K562 (cell line): ENCODE measurements at regions of chr16 and their contacts with region 1.

Region 1: DNA sequence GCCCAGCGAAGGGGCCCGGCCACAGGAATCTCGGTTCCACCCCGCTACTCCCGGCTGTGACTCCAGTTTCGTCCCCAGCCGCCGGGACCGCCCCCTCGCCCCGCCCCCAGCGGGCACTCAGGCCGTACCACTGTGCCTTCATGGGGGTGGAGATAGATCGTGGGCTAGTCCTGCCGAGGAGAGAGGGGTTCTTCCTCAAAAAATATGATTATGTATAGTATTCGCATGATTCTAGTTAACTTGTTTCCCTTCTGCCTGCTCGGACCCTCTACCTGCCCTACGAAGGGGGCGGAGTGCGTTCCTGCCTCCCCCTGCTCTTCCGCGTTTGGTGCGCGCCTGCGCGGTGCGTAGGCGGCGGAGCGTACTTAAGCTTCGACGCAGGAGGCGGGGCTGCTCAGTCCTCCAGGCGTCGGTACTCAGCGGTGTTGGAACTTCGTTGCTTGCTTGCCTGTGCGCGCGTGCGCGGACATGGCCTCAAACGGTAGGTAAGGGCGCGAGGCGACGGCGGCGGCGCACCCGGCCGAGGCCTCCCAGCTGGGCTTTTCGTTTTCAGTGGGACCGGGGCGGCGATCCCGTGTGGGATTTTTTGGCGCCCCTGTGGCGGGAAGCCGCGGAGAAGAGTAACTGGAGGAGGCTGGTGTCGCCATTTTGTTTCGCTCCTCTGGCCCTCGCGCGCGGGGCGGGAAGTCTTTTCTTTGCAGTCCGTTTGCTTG is at the start of gene FUS:
- DNase-seq: peak; percentile 94 to 97 (median 94)
- ATAC-seq: peak; percentile 75
- H3K4me3 ChIP-seq: peak within 1 kb of the TSS; percentile 81
- H3K27ac ChIP-seq: peak within 1 kb of the TSS; percentile 100
- H3K4me1 ChIP-seq: peaks cover 18 to 21% of the 10 kb centered on the region in 2 experiments
- H3K27me3 ChIP-seq: no peaks in the 10 kb centered on the region; a peak in 1 of 5 replicates
- CTCF ChIP-seq: peak in 2 of 3 experiments; percentile 4 to 5; a peak in 1 of 6 replicates
- EP300 ChIP-seq: no peak
- POLR2A ChIP-seq: peak; percentile 100
- RAD21 ChIP-seq: peak; percentile 2 to 25; a peak in 1 of 4 replicates
- polyA plus RNA-seq, gene FUS: 43.9 to 59.5 TPM

Region 2: DNA sequence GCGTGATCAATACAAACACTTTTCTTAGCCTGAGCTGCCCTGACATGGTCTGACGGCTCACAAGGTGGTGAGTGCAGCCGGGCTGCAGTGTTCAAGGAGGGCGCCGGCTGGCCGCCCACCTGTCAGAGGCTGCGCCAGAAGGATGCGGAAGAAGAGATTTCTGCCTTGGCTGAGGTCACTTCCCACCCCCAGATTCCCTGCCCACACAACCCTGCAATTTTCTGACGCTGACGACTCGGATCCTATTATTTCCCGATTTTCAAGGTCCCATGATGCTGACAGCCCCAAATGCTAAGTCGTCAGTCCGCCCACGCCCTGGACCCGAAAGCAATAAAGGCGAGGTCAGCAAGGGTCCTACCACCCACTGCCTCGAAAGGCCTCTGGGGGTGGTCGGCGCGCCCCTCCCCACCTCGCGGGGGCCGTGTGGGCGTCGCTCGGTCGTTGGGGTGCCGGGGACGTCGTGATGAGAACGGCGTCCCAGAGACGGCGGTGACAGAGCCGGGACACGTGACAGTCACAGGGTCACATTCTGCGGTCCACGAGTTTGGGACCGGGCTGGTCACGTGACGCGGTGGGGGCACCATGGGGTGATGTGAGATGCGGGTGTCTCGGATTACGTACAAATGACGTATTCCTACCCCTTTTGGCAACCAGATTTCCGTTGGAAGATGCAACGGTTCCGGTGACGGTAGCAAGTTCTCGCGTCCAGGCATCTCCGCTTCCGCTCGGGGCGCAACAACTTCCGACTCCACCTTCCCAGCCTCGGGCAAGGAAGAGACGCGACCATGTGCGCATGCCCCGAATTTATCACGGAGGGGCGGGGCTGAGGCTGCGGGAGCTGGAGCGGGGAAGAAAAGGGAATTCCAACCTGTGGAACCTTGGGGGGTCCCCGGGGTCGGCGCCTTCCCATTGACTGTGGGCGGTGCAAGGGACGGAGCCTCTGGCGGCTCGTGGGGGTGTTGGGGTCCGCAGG is 146.9 kb before region 1 on chr16 and contains the start of gene STX4:
- CTCF ChIA-PET with region 1: no interaction called
- POLR2A ChIA-PET with region 1: interaction called, 12 read pairs
- in situ Hi-C with region 1: no loop called
- intact Hi-C with region 1: no loop called
- DNase-seq: peak; percentile 91 to 99 (median 96)
- ATAC-seq: peak; percentile 88
- H3K4me3 ChIP-seq: peak within 1 kb of the TSS; percentile 98
- H3K27ac ChIP-seq: peak within 1 kb of the TSS; percentile 91
- H3K4me1 ChIP-seq: peaks cover 16 to 20% of the 10 kb centered on the region in 2 experiments
- H3K27me3 ChIP-seq: no peaks in the 10 kb centered on the region
- CTCF ChIP-seq: no peak; a peak in 1 of 6 replicates
- EP300 ChIP-seq: peak; percentile 81
- POLR2A ChIP-seq: peak; percentile 68
- RAD21 ChIP-seq: 0 out of 4 replicates have a peak, but pooled peaks of 1 of the 2 experiments have one; percentile 2
- polyA plus RNA-seq, gene STX4: 3.2 to 7.4 TPM

Region 3: DNA sequence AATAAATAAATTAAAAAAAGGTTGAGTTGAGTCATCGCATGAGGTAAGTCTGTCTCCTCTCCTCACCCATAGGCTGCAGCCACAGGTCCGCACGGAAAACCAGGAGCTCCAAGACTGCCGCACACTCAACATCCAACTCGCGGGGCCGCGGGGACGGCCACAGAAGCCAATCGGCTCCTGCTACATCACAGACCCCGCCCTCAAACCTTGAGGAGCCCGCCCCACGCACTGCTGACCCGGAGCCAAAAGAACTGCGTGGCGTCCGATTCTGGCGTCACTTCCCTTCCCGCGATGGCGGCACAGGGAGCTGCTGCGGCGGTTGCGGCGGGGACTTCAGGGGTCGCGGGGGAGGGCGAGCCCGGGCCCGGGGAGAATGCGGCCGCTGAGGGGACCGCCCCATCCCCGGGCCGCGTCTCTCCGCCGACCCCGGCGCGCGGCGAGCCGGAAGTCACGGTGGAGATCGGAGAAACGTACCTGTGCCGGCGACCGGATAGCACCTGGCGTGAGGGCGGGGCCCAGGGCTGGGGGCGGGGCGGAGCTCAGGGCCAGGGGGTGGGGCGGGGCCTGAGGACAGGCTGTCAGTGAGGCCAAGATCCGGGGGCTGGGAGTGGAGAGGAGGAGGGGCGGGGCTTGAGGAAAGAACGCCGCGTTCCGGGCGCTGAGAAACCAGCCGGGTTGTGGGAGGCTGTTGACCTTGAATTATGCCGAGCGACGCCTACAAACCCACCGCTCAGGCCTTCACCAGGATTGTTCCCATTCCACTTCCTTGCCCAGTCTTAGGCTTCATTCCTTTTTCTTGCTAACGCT is 62.3 kb before region 1 on chr16 and contains the start of gene KAT8:
- CTCF ChIA-PET with region 1: no interaction called
- POLR2A ChIA-PET with region 1: interaction called, 29 read pairs
- in situ Hi-C with region 1: no loop called
- intact Hi-C with region 1: no loop called
- DNase-seq: peak; percentile 98 to 99 (median 98)
- ATAC-seq: peak; percentile 95
- H3K4me3 ChIP-seq: peak within 1 kb of the TSS; percentile 68
- H3K27ac ChIP-seq: peak within 1 kb of the TSS; percentile 91
- H3K4me1 ChIP-seq: peaks cover 2 to 19% of the 10 kb centered on the region in 2 experiments; a peak in 4 of 5 replicates
- H3K27me3 ChIP-seq: no peaks in the 10 kb centered on the region
- CTCF ChIP-seq: no peak
- EP300 ChIP-seq: peak; percentile 50
- POLR2A ChIP-seq: peak; percentile 95
- RAD21 ChIP-seq: no peak; a peak in 1 of 4 replicates
- polyA plus RNA-seq, gene KAT8: 10.0 to 12.3 TPM

Region 4: DNA sequence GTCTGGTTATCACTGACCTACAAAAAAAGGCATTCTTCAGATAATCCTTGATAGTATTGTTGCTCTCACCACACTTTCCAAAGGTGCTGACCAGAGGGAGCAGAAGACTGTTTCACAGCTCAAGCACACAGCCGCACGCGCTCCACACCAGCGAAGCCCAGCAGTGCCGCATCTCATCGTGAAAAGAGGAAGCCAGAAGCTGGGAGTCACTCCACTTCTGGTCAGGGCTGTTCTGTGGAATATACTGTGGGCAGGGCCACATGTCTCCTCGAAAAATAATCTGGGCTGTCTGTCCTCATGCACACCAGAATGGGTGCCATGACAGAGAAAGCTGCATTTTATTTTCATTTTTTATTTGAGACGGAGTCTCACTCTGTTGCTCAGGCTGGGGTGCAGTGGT is 22.8 kb before region 1 on chr16:
- CTCF ChIA-PET with region 1: no interaction called
- POLR2A ChIA-PET with region 1: interaction called, 37 read pairs
- in situ Hi-C with region 1: no loop called
- intact Hi-C with region 1: no loop called
- DNase-seq: peak in 2 of 4 experiments; percentile 42 to 64
- ATAC-seq: peak; percentile 93
- H3K4me3 ChIP-seq: no peak overlapping the region
- H3K27ac ChIP-seq: no peak overlapping the region
- H3K4me1 ChIP-seq: peaks cover 0 to 7% of the 10 kb centered on the region in 2 experiments; a peak in 3 of 5 replicates
- H3K27me3 ChIP-seq: no peaks in the 10 kb centered on the region
- CTCF ChIP-seq: no peak
- EP300 ChIP-seq: no peak
- POLR2A ChIP-seq: no peak
- RAD21 ChIP-seq: no peak

Region 5: DNA sequence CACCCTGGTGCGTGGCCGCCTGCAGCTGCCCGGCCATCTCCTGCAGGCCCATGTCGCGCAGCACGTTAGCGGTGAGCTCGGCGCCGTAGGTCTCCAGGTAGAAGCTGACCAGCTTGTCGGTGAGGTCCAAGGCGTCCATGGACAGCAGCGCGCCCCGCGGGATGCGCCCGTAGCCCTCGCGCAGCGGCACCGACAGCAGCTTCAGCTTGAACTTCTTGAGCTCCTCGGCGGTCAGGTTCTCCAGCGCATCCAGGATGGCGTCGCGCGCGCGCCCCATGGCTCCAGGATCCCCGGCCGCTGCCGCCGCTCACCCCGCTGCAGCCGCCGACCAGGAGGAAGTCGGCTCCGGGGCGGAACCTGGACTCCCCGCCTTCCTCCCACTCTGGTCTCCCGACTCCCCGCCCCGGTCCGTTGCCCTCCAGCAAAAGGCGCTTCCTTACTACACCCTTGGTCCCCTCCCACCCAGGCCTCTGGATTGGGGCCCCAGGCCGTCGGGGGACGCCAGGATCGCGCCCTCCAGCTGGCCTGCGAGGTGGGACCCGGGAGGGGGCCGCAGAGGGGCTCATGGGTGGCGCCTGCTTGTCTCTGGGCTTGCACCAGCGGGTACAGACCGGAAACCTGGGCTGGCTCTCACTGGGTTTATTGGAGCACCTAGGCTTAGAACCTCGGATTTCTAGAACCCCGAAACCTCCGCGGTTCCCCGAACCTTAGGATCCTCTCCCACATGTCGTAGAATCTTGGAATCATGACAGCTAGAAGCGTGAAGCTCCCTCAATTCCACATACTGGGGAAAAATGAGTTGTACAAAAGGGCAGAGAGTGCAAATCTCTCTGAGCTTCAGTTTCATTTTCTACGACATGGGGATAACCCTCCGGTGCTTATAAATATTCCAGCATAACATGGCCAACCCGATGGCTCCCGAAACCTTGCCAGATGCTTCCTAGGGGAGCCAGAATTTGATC is 22.8 kb after region 1 on chr16 and contains the start of gene PYCARD:
- CTCF ChIA-PET with region 1: no interaction called
- POLR2A ChIA-PET with region 1: interaction called, 12 read pairs
- in situ Hi-C with region 1: no loop called
- intact Hi-C with region 1: no loop called
- DNase-seq: peak; percentile 41 to 59 (median 57)
- ATAC-seq: peak; percentile 22
- H3K4me3 ChIP-seq: peak within 1 kb of the TSS; percentile 45
- H3K27ac ChIP-seq: no peak within 1 kb of the TSS; the same call in 2 of the 3 replicates
- H3K4me1 ChIP-seq: peaks cover 20 to 33% of the 10 kb centered on the region in 2 experiments
- H3K27me3 ChIP-seq: peaks cover 0 to 6% of the 10 kb centered on the region in 2 experiments; a peak in 2 of 5 replicates
- CTCF ChIP-seq: no peak
- EP300 ChIP-seq: no peak
- POLR2A ChIP-seq: no peak
- RAD21 ChIP-seq: no peak
- polyA plus RNA-seq, gene PYCARD: 1.3 to 1.6 TPM